ENCODE measurements at regions of chr14 and their contacts with region 1.

Region 1: DNA sequence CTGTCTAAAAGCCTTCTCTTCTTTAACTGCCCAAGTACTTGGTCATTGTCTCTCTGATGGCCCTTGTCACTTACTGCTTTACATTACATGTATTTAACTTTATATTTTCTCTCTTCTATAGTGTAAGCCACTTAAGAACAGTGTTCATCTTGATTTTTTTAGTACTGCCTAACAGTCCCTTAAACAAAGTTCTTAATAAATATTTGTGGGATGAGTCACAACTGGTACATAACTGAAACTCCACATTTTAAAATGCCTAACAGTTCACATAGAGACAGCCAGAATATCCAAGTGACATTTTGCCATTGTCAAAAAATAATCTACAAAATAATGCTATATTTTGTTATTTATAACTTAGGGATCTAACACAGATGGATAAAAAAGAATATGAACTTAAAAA is 146.6 kb downstream of the STXBP6 start:
- DNase-seq: no peak
- H3K4me3 ChIP-seq: no peak overlapping the region
- H3K27ac ChIP-seq: no peak overlapping the region
- H3K4me1 ChIP-seq: no peaks in the 10 kb centered on the region
- H3K27me3 ChIP-seq: no peaks in the 10 kb centered on the region
- CTCF ChIP-seq: no peak
- POLR2A ChIP-seq: no peak

Region 2: GRCh38 chr14:24673534-24674203 is 229.7 kb before region 1 on chr14:
- intact Hi-C with region 1: no loop called
- DNase-seq: no peak
- H3K4me3 ChIP-seq: no peak overlapping the region
- H3K27ac ChIP-seq: no peak overlapping the region
- H3K4me1 ChIP-seq: no peaks in the 10 kb centered on the region
- H3K27me3 ChIP-seq: no peaks in the 10 kb centered on the region
- CTCF ChIP-seq: no peak
- POLR2A ChIP-seq: no peak

Region 3: DNA sequence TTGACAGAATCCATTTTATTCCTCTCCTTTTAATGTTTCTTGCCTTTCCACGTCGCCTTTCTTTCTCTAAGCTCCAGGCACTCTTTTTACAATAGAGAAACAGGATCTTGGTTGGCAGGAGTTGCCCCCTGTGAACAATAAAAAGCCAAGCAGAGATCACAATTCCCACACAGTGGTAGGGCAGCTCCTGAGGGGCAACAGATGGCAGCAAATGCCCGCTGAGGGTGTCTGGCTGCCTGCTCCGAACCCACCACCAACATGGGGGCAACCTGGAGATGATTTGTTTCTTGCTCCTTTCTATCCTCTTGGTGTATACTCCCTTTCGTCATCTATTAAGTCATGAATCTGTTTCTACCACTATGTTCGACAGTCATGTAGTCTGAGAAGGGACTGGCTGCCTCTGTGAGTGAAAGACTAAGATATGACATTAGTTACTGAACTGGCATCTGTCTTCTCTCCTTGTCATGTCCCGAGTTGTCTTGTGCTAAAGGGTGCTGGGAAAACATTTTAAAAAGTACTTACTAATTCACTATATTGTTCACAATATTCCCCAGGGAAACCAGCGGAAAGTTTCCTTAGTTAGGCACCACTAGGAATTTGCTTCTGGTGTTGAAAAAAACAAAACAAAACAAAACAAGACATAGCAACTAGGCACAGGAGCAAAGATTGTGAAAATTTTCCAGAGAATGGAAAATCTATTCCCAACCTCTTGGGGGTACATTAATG is 23.5 kb before region 1 on chr14:
- intact Hi-C with region 1: loop called (anchors 2 kb)
- DNase-seq: no peak
- H3K4me3 ChIP-seq: no peak overlapping the region
- H3K27ac ChIP-seq: peak overlapping the region in 1 of 2 donors; percentile 22
- H3K4me1 ChIP-seq: no peaks in the 10 kb centered on the region
- H3K27me3 ChIP-seq: no peaks in the 10 kb centered on the region
- CTCF ChIP-seq: no peak
- POLR2A ChIP-seq: no peak

Region 4: GRCh38 chr14:24965934-24966578 is 62.7 kb after region 1 on chr14:
- intact Hi-C with region 1: no loop called
- DNase-seq: no peak
- H3K4me3 ChIP-seq: no peak overlapping the region
- H3K27ac ChIP-seq: peak overlapping the region in 1 of 2 donors; percentile 27
- H3K4me1 ChIP-seq: no peaks in the 10 kb centered on the region
- H3K27me3 ChIP-seq: no peaks in the 10 kb centered on the region
- CTCF ChIP-seq: no peak
- POLR2A ChIP-seq: no peak

Region 5: GRCh38 chr14:25400607-25401206 is 497.4 kb after region 1 on chr14:
- intact Hi-C with region 1: no loop called
- DNase-seq: peak in 1 of 2 donors; percentile 22
- H3K4me3 ChIP-seq: no peak overlapping the region
- H3K27ac ChIP-seq: no peak overlapping the region
- H3K4me1 ChIP-seq: no peaks in the 10 kb centered on the region
- H3K27me3 ChIP-seq: no peaks in the 10 kb centered on the region
- CTCF ChIP-seq: peak in 2 of 3 donors; percentile 54 to 57
- POLR2A ChIP-seq: no peak

Measured in breast epithelium (tissue), 4 donors.